Activated CD8-positive, alpha-beta memory T cell treated with anti-CD3 and anti-CD28 coated beads, Interleukin-2, amount 10 ng/mL, durations not matched to agents 7 days and 5 days (primary cell): ENCODE measurements at regions of chr20 and their contacts with region 1.

Region 1: GRCh38 chr20:34704177-34705007 is at the start of gene TP53INP2:
- DNase-seq: peak; percentile 93
- ATAC-seq: peak; percentile 65
- H3K4me3 Mint-ChIP-seq: peak within 1 kb of the TSS; percentile 83
- H3K27ac Mint-ChIP-seq: peak within 1 kb of the TSS; percentile 85
- H3K4me1 Mint-ChIP-seq: peaks cover 22% of the 10 kb centered on the region
- H3K27me3 Mint-ChIP-seq: peaks cover 19% of the 10 kb centered on the region
- total RNA-seq, gene TP53INP2: 1.4 to 2.4 TPM

Region 2: GRCh38 chr20:34538671-34539123 is 165.7 kb before region 1 on chr20:
- CTCF ChIA-PET with region 1: interaction called, 42 read pairs
- DNase-seq: peak; percentile 65
- ATAC-seq: peak; percentile 42
- H3K4me3 Mint-ChIP-seq: no peak overlapping the region
- H3K27ac Mint-ChIP-seq: no peak overlapping the region
- H3K4me1 Mint-ChIP-seq: peaks cover 9% of the 10 kb centered on the region
- H3K27me3 Mint-ChIP-seq: no peaks in the 10 kb centered on the region